Naive thymus-derived CD4-positive, alpha-beta T cell (primary cell): ENCODE measurements at regions of chr17 and their contacts with region 1.

Region 1: GRCh38 chr17:76072148-76072858 is at the start of gene SRP68:
- DNase-seq: peak; percentile 63 to 86 (median 74)
- ATAC-seq: peak; percentile 92
- H3K4me3 ChIP-seq: peak within 1 kb of the TSS; percentile 89
- H3K4me3 Mint-ChIP-seq: peak within 1 kb of the TSS; percentile 85 to 98 (median 97)
- H3K27ac ChIP-seq: peak within 1 kb of the TSS; percentile 93
- H3K27ac Mint-ChIP-seq: peak within 1 kb of the TSS; percentile 90 to 98 (median 95)
- H3K4me1 ChIP-seq: peaks cover 10 to 37% of the 10 kb centered on the region in 2 donors
- H3K4me1 Mint-ChIP-seq: peaks cover 21 to 62% (median 52%) of the 10 kb centered on the region in 7 donors
- H3K27me3 ChIP-seq: peaks cover 13 to 14% of the 10 kb centered on the region in 2 donors
- H3K27me3 Mint-ChIP-seq: peaks cover 17 to 37% (median 24%) of the 10 kb centered on the region in 5 donors
- total RNA-seq, gene SRP68: 70.8 to 105 (median 91.9) TPM

Region 2: DNA sequence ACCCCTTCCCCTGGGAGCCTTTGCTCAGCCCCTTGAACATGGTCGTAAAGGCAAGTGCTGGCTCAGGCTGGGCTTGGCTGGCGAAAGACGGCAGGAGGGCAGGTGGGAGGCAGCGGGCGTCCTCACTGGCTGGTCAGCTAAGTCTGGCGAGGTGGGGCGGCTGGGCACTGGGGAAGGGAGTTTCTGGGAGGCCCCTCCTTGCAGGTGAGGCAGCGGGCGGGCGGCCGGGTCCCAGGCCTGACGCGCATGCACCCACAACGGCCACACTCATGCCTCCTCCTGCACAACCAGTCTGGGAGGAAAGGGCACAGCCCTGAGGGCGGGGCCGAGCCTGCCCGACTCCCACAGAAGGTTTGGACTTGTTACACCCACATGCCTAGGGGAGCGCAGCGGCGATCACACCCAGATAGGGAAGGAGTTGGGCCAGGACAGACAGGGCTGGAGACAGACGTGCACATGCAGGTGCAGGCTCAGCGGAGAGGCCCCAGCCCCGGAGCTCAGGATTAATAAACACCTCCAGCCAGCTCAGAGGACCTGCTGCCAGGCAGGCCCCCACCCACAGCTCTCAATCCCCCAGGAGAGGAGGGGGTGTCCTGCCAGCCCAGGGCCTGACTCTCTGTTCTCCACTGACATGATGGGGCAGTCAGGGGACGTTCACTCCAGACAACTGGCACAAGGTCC is 45.0 kb before region 1 on chr17 and contains the start of gene EVPL:
- CTCF ChIA-PET with region 1: no interaction called
- POLR2A ChIA-PET with region 1: interaction called, 4 read pairs
- intact Hi-C with region 1: loop called in 1 of 2 experiments (anchors 1 kb)
- DNase-seq: no peak
- ATAC-seq: no peak
- H3K4me3 ChIP-seq: no peak within 1 kb of the TSS
- H3K4me3 Mint-ChIP-seq: peak within 1 kb of the TSS in 1 of 10 donors; percentile 84
- H3K27ac ChIP-seq: peak within 1 kb of the TSS; percentile 40
- H3K27ac Mint-ChIP-seq: peak within 1 kb of the TSS in 6 of 9 donors; percentile 25 to 97 (median 80)
- H3K4me1 ChIP-seq: peaks cover 8 to 23% of the 10 kb centered on the region in 2 donors
- H3K4me1 Mint-ChIP-seq: peaks cover 9 to 31% (median 26%) of the 10 kb centered on the region in 7 donors
- H3K27me3 ChIP-seq: no peaks in the 10 kb centered on the region
- H3K27me3 Mint-ChIP-seq: no peaks in the 10 kb centered on the region
- total RNA-seq, gene EVPL: 0.07 to 2.7 (median 0.39) TPM

Region 3: DNA sequence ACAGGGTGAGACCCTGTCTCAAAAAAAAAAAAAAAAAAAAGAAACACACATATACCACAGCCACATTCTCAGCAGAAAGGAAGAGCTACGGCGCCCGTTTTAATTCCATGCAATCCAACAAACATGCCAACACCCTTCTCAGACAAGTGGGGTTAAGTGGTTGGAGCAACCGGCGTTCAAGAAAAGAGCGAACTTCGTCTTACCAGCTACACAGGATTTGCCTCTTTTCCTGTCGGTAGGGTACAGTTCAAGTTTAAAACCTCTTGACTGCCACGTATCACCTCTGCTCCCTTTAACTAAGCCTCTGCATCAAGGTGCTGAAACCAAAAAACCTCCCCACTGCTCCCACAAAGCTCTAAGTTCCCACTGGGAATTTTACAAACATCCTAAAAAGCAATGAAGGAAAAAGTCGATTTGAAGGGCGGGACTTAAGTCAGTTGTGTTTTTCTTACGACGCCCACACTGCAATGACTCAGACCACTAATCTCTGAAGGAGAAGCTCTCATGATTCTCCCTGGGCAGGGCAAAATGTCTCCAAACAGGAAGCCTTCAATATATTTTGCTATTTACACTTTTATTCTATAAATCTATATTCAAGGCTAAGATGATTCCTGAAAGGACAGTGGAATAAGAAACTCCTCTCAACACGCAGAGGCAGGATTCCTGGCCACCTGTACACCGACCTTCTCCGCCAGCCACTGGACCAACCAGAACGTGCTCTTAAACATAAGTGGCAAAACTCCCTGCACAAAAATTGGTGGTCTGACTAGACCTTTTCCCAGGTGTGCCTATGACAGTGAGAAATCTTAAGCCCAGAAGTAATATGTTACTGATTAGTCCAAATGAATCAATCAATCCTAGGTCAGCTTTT is 18.8 kb before region 1 on chr17:
- CTCF ChIA-PET with region 1: no interaction called
- POLR2A ChIA-PET with region 1: interaction called, 3 read pairs
- intact Hi-C with region 1: loop called in 1 of 2 experiments (anchors 1 kb)
- DNase-seq: no peak
- ATAC-seq: no peak
- H3K4me3 ChIP-seq: no peak overlapping the region
- H3K4me3 Mint-ChIP-seq: no peak overlapping the region
- H3K27ac ChIP-seq: no peak overlapping the region
- H3K27ac Mint-ChIP-seq: peak overlapping the region in 4 of 9 donors; percentile 13 to 67 (median 32)
- H3K4me1 ChIP-seq: no peaks in the 10 kb centered on the region
- H3K4me1 Mint-ChIP-seq: peaks cover 11 to 33% (median 25%) of the 10 kb centered on the region in 7 donors
- H3K27me3 ChIP-seq: no peaks in the 10 kb centered on the region
- H3K27me3 Mint-ChIP-seq: no peaks in the 10 kb centered on the region